MCF 10A (cell line): ENCODE measurements at regions of chr5 and their contacts with region 1.

Region 1: GRCh38 chr5:108481355-108481931 is 99.5 kb upstream of the FBXL17 start:
- DNase-seq: peak; percentile 67
- H3K4me3 Mint-ChIP-seq: no peak overlapping the region
- H3K27ac Mint-ChIP-seq: no peak overlapping the region
- H3K4me1 Mint-ChIP-seq: no peaks in the 10 kb centered on the region
- H3K27me3 Mint-ChIP-seq: peaks cover 10% of the 10 kb centered on the region
- CTCF ChIP-seq: peak; percentile 43

Region 2: GRCh38 chr5:108266235-108266634 is 215.2 kb before region 1 on chr5:
- CTCF ChIA-PET with region 1: no interaction called
- POLR2A ChIA-PET with region 1: no interaction called
- intact Hi-C with region 1: no loop called
- DNase-seq: peak; percentile 69
- H3K4me3 Mint-ChIP-seq: no peak overlapping the region
- H3K27ac Mint-ChIP-seq: no peak overlapping the region
- H3K4me1 Mint-ChIP-seq: no peaks in the 10 kb centered on the region
- H3K27me3 Mint-ChIP-seq: no peaks in the 10 kb centered on the region
- CTCF ChIP-seq: no peak

Region 3: GRCh38 chr5:109468737-109469420 is 987.4 kb after region 1 on chr5:
- CTCF ChIA-PET with region 1: no interaction called
- POLR2A ChIA-PET with region 1: no interaction called
- intact Hi-C with region 1: loop called (anchors 1 kb)
- DNase-seq: peak; percentile 96
- H3K4me3 Mint-ChIP-seq: no peak overlapping the region
- H3K27ac Mint-ChIP-seq: peak overlapping the region; percentile 24
- H3K4me1 Mint-ChIP-seq: peaks cover 6% of the 10 kb centered on the region
- H3K27me3 Mint-ChIP-seq: no peaks in the 10 kb centered on the region
- CTCF ChIP-seq: peak; percentile 63